ENCODE measurements at regions of chr15 and their contacts with region 1.

Region 1: DNA sequence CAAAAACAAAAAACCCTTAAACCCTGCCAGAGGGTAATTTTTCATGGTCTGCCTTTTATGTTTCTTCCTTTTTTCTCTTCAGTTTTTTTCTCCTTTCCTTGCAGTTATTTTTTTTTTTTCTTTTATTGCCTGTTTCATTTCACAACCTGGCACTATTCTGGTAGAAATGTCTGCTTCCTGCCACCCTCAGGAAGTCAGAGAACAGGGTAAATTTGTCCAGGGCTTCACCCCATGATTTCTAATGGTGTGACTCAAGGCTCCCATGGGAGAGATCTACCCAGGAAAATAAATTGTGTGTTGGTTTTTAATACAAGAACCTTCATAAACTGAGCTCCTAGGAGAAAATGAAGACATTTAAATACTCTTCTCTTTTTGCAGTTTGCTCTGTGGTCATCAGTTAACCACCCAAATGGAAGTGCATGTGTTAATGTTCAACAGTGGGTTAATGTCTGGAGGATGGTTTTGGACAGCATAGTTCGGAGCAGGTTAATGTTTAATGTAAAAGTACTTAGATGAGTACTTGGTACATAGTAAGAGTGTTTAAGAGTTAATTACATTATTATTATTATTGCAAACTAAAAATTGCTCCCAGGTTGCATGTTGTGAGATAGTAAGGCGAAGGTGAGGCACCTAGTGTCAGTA is 45.9 kb downstream of the CGNL1 start:
- DNase-seq: no peak
- ATAC-seq: no peak
- H3K4me3 ChIP-seq: no peak overlapping the region
- H3K27ac ChIP-seq: no peak overlapping the region
- H3K4me1 ChIP-seq: no peaks in the 10 kb centered on the region
- H3K27me3 ChIP-seq: no peaks in the 10 kb centered on the region
- CTCF ChIP-seq: no peak

Region 2: DNA sequence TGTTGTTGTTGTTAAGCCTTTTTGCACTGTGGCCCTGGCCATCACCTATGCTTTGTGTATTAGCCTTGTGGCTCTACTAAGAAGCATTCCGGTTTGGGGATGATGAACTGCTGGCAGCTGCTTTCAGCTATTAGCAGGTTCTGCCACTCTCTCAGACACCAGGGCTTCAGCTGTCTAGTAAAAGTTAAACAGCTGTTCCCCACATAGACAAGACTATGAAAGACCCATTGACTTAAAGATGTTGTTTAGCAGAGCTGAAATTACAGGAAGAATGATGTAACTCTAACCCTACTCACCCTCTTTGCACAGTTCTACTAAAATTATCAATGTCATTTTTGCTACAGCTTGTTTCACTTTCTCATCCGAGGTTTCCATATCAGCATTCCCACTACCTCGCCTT is 177.1 kb before region 1 on chr15:
- intact Hi-C with region 1: no loop called
- DNase-seq: no peak
- ATAC-seq: no peak
- H3K4me3 ChIP-seq: no peak overlapping the region
- H3K27ac ChIP-seq: no peak overlapping the region
- H3K4me1 ChIP-seq: peaks cover 5% of the 10 kb centered on the region
- H3K27me3 ChIP-seq: no peaks in the 10 kb centered on the region
- CTCF ChIP-seq: no peak

Region 3: DNA sequence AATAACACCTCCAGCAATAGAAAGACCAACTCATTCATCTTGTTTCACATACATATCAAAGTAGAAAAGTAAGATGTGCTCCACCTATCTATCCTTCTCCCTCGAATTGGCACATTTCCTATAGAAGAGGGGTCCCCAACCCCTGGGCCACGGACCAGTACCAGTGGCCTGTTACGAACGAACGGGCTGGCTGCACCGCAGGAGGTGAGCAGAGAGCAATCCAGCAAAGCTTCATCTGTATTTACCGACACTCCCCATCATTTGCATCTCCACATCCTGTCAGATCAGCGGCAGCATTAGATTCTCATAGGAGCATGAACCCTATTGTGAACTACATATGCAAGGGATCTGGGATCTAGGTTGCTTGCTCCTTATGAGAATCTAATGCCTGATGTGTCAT is 140.9 kb before region 1 on chr15:
- intact Hi-C with region 1: no loop called
- DNase-seq: no peak
- ATAC-seq: no peak
- H3K4me3 ChIP-seq: no peak overlapping the region
- H3K27ac ChIP-seq: no peak overlapping the region
- H3K4me1 ChIP-seq: no peaks in the 10 kb centered on the region
- H3K27me3 ChIP-seq: no peaks in the 10 kb centered on the region
- CTCF ChIP-seq: no peak

Region 4: GRCh38 chr15:57395292-57395691 is 26.9 kb before region 1 on chr15:
- intact Hi-C with region 1: loop called in 1 of 2 experiments (anchors 1 kb)
- DNase-seq: no peak
- ATAC-seq: peak in 2 of 4 donors; percentile 80 to 86
- H3K4me3 ChIP-seq: no peak overlapping the region
- H3K27ac ChIP-seq: no peak overlapping the region
- H3K4me1 ChIP-seq: no peaks in the 10 kb centered on the region
- H3K27me3 ChIP-seq: no peaks in the 10 kb centered on the region
- CTCF ChIP-seq: no peak